Cardiac septum (tissue), 1 donor: ENCODE measurements at regions of chr18 and their contacts with region 1.

Region 1: GRCh38 chr18:27017901-27018500 is 152.5 kb upstream of the AQP4 start:
- DNase-seq: no peak

Region 2: DNA sequence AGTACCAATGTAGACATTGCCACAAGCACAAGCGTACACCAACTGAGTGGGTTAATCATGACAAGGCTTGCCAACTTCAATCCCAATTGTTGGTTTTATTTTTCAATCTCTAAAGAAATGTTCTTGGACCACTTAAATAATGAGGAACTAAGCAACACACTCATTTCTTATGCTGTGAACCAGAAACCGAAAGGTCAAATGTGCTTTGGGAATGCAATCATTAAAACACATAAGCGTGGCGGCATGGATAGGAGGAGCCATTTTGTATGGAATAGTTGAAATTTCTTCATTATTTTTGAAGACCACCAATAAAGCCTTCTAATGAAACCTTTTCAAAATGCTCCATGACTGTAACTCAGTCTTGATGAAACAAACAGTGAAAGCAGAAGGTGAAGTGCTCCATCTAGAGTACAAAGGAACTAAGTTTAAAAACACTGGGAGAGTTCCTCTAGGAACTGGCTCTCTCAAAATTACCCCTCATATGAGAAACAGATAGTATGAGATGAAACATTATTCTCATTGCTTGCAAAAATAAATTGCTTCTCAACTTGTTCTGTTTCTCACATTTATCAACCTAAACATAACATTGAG is 280.3 kb after region 1 on chr18:
- intact Hi-C with region 1: loop called (anchors 2 kb)
- DNase-seq: no peak

Region 3: DNA sequence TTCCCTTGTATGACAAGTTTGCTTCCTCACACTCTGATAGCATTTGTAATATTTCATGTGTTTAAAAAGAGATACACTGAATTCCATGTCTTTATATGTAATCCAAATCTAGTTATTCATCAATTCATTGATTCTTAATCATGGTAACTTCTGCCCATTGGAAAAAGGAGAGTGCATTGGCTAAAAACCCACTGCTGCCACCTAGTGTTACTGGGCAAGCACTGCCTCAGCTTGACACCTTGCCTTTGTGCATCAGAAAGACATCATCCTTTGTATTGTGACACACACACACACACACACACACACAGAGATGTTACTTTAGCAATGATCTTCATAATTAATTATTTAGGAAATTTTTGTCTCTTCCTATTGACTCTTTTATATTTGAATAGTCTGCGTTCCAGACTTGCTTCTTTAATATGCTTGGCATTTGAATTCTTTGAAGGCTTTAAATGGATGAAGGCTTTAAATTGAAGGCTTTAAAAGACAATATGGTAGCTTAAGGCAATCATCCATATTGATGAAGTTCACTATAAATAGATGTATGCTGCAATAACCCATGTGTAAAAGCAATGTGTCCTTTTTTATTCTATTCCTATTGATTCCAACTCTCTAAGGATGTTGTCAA is 581.3 kb after region 1 on chr18:
- intact Hi-C with region 1: loop called (anchors 5 kb)
- DNase-seq: no peak